Activated CD4-positive, alpha-beta T cell treated with anti-CD3 and anti-CD28 coated beads, Interleukin-2, amount 10 ng/mL, durations not matched to agents 7 days and 5 days (primary cell): ENCODE measurements at regions of chr7 and their contacts with region 1.

Region 1: DNA sequence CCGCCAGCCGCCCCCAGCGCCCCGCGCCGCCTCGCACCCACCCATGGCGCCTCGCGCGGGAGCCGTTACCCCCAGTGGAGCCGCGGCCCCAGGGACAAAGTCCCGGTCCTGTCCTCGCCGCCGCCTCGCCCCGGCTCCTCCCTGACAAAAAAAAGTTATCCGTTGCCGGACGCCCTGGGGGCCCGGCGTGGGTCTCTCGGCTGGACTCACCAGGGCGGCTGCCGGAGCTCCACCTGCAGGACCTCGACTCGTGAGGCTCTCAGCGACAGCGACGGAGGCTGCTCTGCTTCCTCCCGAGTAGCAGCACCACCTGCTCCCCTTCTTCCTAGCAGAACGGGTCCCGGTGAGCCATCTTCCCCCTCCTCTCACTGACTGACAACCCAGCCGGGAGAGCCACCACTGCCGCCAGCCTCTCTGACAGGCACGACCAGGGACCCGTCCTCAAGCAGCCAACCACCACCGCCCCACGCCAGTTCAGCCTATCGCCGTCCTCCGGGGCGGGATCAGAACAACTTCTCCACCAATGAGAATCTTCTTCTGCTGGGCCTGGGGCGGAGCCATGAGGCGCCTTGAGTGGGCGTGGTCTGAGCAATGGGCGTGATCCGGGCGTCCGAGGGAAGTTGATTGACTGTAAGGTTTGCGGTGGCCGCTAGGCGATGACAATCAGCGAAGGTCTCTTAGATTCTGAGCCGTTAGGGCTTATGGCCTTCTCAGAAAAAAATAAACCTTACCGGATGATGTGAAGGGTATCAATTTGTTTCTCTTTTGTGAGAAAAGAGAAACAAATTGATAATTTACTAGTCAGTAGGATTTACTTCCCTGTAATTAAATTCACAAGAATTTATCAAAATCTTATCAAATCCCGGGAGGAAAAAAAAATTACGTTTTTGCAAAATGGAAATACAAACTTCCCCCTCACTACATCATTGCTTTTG is at the start of gene HYCC1:
- DNase-seq: peak; percentile 99
- H3K4me3 Mint-ChIP-seq: peak within 1 kb of the TSS; percentile 94
- H3K27ac Mint-ChIP-seq: peak within 1 kb of the TSS; percentile 96
- H3K4me1 Mint-ChIP-seq: peaks cover 35% of the 10 kb centered on the region
- H3K27me3 Mint-ChIP-seq: no peaks in the 10 kb centered on the region
- total RNA-seq, gene HYCC1: 47.2 to 54.2 TPM

Region 2: DNA sequence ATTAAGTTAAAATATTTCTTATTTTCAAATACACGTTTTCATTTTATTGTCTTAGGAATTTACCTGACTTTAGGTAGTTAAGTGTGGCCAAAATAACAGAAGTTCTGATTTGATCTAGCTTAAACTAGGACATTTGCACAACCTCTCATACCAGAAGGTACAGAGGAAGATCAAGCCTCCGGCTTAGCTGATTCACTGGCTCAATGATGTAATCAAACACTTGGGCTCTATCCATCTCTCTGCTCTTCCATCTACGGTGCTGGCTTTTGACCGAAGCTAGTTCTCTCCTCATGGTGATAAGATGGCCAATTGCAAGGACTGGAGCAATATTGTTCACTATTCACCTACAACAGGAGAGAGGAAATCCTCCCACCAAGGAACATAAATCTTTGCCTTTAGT is 12.2 kb after region 1 on chr7:
- CTCF ChIA-PET with region 1: interaction called, 10 read pairs
- POLR2A ChIA-PET with region 1: no interaction called
- DNase-seq: no peak
- H3K4me3 Mint-ChIP-seq: no peak overlapping the region
- H3K27ac Mint-ChIP-seq: no peak overlapping the region
- H3K4me1 Mint-ChIP-seq: peaks cover 12% of the 10 kb centered on the region
- H3K27me3 Mint-ChIP-seq: peaks cover 35% of the 10 kb centered on the region